ENCODE measurements at regions of chr1 and their contacts with region 1.

Region 1: GRCh38 chr1:24830680-24831272 is 85.5 kb downstream of the CLIC4 start:
- DNase-seq: peak; percentile 78
- ATAC-seq: peak; percentile 82
- H3K4me3 ChIP-seq: no peak overlapping the region
- H3K4me3 Mint-ChIP-seq: no peak overlapping the region
- H3K27ac ChIP-seq: no peak overlapping the region
- H3K27ac Mint-ChIP-seq: no peak overlapping the region
- H3K4me1 ChIP-seq: peaks cover 13 to 24% of the 10 kb centered on the region in 2 donors
- H3K4me1 Mint-ChIP-seq: peaks cover 51% of the 10 kb centered on the region
- H3K27me3 ChIP-seq: no peaks in the 10 kb centered on the region
- H3K27me3 Mint-ChIP-seq: no peaks in the 10 kb centered on the region
- CTCF ChIP-seq: peak; percentile 98

Region 2: DNA sequence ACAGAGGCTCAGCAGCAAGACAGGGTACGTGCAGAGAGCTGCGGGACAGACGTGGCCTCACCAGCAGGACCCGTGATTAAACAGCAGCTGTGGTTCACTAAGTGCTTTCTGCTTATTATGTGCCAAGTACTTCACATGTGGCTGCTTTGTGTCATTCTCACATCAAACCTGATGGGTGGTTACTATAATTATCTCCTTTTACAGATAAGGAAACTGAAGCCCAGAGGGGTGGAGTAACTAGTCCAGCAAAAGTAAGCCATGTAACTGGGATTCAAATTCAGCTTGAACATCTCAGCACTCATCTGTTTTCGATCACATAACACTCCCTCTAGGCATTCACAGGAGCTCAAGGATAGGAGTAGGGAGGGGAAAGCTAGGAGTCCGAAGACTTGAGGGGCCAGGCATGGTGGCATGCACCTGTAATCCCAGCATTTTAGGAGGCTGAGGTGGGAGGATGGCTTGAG is 136.4 kb before region 1 on chr1:
- CTCF ChIA-PET with region 1: interaction called, 579 read pairs
- POLR2A ChIA-PET with region 1: no interaction called
- intact Hi-C with region 1: loop called (anchors 2 kb)
- DNase-seq: peak; percentile 32
- ATAC-seq: no peak
- H3K4me3 ChIP-seq: peak overlapping the region in 1 of 5 experiments; percentile 14
- H3K4me3 Mint-ChIP-seq: peak overlapping the region; percentile 70
- H3K27ac ChIP-seq: peak overlapping the region; percentile 60 to 71
- H3K27ac Mint-ChIP-seq: peak overlapping the region; percentile 71
- H3K4me1 ChIP-seq: peaks cover 30 to 32% of the 10 kb centered on the region in 2 donors
- H3K4me1 Mint-ChIP-seq: peaks cover 34% of the 10 kb centered on the region
- H3K27me3 ChIP-seq: no peaks in the 10 kb centered on the region
- H3K27me3 Mint-ChIP-seq: no peaks in the 10 kb centered on the region
- CTCF ChIP-seq: no peak

Region 3: DNA sequence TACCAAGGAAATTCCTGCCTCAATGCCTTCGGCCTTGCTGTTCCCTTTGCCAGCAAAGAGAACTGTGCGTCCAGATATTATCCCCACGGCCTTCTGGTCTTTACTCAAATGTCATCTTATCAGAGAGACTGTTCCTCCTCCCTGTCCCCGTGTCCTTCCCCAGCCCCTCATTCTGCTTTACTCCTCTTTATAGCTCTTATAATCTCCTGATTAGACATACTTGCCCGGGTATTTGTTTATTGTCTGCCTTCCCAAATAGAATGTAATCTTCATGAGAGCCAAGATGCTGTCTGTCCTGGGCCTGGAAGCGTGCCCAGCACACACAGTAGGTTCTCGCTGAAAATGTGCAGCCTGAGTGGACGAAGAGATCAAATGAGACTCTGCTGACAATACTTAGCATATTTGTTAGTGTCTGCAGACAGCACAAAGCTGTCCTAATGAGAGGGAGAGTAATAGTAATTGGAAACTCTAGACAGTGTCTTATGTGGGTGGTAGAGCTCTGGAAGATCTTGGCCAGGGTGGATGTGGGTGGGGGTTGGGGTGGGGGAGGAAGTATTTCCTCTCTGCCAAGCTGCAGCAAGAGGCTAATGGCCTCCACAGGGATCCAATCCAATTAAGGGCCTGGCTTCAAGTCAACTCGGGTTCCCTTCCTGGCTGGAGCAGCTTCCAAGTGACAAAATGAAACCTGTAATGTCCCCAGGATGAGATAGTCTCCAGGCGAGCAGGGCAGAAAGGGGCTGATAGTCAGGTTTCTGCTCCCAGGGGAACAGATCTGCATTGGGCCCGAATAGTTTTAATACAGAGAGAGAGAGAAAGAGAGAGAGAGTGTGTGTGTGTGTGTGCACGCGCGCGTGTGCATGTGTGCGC is 95.0 kb before region 1 on chr1:
- CTCF ChIA-PET with region 1: interaction called, 10 read pairs
- POLR2A ChIA-PET with region 1: no interaction called
- intact Hi-C with region 1: no loop called
- DNase-seq: peak; percentile 20
- ATAC-seq: no peak
- H3K4me3 ChIP-seq: no peak overlapping the region
- H3K4me3 Mint-ChIP-seq: peak overlapping the region; percentile 68
- H3K27ac ChIP-seq: peak overlapping the region in 1 of 2 donors; percentile 32
- H3K27ac Mint-ChIP-seq: peak overlapping the region; percentile 83
- H3K4me1 ChIP-seq: peaks cover 42 to 70% of the 10 kb centered on the region in 2 donors
- H3K4me1 Mint-ChIP-seq: peaks cover 48% of the 10 kb centered on the region
- H3K27me3 ChIP-seq: no peaks in the 10 kb centered on the region
- H3K27me3 Mint-ChIP-seq: no peaks in the 10 kb centered on the region
- CTCF ChIP-seq: no peak

Region 4: DNA sequence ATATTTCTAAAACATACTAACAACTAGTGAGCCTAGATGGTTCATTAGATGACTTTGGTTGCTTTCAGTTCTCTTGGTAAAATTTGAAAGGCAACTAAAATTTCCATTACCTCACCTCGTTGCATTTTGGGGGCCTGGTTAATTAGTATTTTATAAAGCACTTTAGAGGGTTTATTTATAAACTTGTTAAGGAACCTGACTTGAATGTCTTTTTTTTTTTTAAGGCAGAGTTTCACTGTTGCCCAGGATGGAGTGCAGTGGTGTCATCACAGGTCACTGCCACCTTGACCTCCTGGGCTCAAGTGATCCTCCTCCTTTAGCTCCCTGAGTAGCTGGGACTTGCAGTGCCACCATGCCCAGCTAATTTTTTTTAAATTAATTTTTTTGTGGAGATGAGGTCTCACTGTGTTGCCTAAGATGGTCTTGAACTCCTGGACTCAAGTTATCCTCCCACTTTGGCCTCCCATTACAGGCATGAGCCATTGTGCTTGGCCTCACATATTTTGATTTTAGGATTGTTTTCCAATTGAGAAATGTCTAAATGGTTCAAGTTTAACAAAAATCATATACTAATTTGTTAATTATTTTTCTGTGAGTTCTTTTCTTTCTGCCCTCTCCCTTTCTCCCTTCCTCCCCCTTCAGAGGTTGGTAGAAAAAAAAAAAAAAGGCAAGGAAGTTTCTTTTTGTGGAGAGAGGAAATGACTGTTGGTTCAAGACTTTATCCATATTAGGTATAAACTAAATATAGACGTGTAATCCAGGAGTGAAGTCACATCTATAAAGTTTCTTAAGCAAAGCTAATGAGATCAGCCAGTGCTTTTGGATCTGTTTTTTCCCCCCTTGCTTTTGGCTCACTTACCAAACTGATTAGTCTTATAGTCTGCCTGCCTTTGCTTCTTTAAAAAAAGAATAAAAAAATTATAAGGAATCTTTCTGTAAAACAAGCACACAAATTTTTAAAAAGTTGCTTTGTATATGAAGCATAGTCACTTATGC is 60.8 kb before region 1 on chr1:
- CTCF ChIA-PET with region 1: interaction called, 10 read pairs
- POLR2A ChIA-PET with region 1: no interaction called
- intact Hi-C with region 1: loop called (anchors 5 kb)
- DNase-seq: no peak
- ATAC-seq: peak; percentile 28
- H3K4me3 ChIP-seq: no peak overlapping the region
- H3K4me3 Mint-ChIP-seq: no peak overlapping the region
- H3K27ac ChIP-seq: peak overlapping the region in 1 of 2 donors; percentile 61
- H3K27ac Mint-ChIP-seq: no peak overlapping the region
- H3K4me1 ChIP-seq: peaks cover 17% of the 10 kb centered on the region in 2 donors
- H3K4me1 Mint-ChIP-seq: peaks cover 53% of the 10 kb centered on the region
- H3K27me3 ChIP-seq: no peaks in the 10 kb centered on the region
- H3K27me3 Mint-ChIP-seq: no peaks in the 10 kb centered on the region
- CTCF ChIP-seq: no peak

Region 5: GRCh38 chr1:25204797-25205480 is 374.2 kb after region 1 on chr1:
- CTCF ChIA-PET with region 1: interaction called, 11 read pairs
- POLR2A ChIA-PET with region 1: no interaction called
- intact Hi-C with region 1: no loop called
- DNase-seq: peak; percentile 63
- ATAC-seq: peak; percentile 49
- H3K4me3 ChIP-seq: no peak overlapping the region
- H3K4me3 Mint-ChIP-seq: no peak overlapping the region
- H3K27ac ChIP-seq: no peak overlapping the region
- H3K27ac Mint-ChIP-seq: no peak overlapping the region
- H3K4me1 ChIP-seq: no peaks in the 10 kb centered on the region
- H3K4me1 Mint-ChIP-seq: no peaks in the 10 kb centered on the region
- H3K27me3 ChIP-seq: peaks cover 0 to 7% (median 0%) of the 10 kb centered on the region in 4 experiments
- H3K27me3 Mint-ChIP-seq: peaks cover 12% of the 10 kb centered on the region
- CTCF ChIP-seq: peak; percentile 86

Measured in B cell (primary cell).